CD8-positive, alpha-beta T cell (primary cell): ENCODE measurements at regions of chr16 and their contacts with region 1.

Region 1: GRCh38 chr16:82229796-82230619 is 60.0 kb upstream of the MPHOSPH6 start:
- DNase-seq: peak; percentile 20 to 74 (median 59)
- ATAC-seq: no peak
- H3K4me3 ChIP-seq: no peak overlapping the region
- H3K4me3 Mint-ChIP-seq: no peak overlapping the region
- H3K27ac ChIP-seq: no peak overlapping the region
- H3K27ac Mint-ChIP-seq: no peak overlapping the region
- H3K4me1 ChIP-seq: no peaks in the 10 kb centered on the region
- H3K4me1 Mint-ChIP-seq: no peaks in the 10 kb centered on the region
- H3K27me3 ChIP-seq: no peaks in the 10 kb centered on the region
- H3K27me3 Mint-ChIP-seq: peaks cover 17% of the 10 kb centered on the region
- CTCF ChIP-seq: peak; percentile 96

Region 2: GRCh38 chr16:81366316-81366932 is 863.6 kb before region 1 on chr16:
- CTCF ChIA-PET with region 1: no interaction called
- POLR2A ChIA-PET with region 1: no interaction called
- intact Hi-C with region 1: loop called in 1 of 2 experiments (anchors 10 kb)
- DNase-seq: peak in 3 of 9 experiments; percentile 18 to 72 (median 64)
- ATAC-seq: peak; percentile 83
- H3K4me3 ChIP-seq: no peak overlapping the region
- H3K4me3 Mint-ChIP-seq: no peak overlapping the region
- H3K27ac ChIP-seq: no peak overlapping the region
- H3K27ac Mint-ChIP-seq: no peak overlapping the region
- H3K4me1 ChIP-seq: no peaks in the 10 kb centered on the region
- H3K4me1 Mint-ChIP-seq: no peaks in the 10 kb centered on the region
- H3K27me3 ChIP-seq: no peaks in the 10 kb centered on the region
- H3K27me3 Mint-ChIP-seq: no peaks in the 10 kb centered on the region
- CTCF ChIP-seq: peak; percentile 85

Region 3: DNA sequence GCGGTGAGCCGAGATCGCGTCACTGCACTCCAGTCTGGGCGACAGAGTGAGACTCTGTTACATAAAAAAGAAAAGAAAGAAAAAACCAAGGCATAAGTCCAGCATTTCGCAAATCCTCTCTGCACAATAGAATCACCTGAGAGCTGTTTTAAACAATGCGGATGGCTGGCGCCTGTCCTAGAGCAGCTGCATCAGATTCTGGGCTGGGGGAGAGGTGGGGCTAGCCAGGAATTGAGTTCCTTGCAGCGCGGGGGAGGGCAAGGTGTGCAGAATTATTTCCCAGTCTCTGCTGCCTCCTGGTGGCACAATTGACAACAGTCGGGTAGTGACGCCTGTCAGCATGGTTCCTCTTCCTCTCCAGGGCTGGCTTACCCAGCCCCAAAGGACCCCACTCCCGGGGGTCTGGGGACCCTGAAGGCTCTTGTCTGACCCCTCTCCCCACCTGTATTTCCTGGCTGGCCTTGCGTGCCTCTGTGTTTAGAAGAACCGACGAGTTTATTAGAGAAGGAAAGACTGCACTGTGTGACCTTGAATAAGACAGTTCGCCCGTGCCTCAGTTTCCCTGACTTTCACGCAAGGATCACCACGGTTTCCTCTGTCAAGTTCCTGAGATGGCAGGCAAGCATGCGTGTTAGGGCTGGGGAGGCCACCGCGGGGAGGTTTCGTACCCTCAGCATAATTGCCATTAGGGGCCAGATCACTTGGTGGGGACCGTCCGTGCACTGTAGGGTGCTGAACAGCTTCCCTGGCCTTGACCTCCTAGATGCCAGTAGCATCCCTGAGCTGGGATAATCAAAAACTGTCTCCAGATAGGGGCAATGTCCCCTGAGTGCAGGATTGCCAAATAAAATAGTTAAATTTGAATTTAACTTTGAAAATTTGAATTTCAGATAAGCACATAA is 491.9 kb before region 1 on chr16:
- CTCF ChIA-PET with region 1: no interaction called
- POLR2A ChIA-PET with region 1: no interaction called
- intact Hi-C with region 1: no loop called
- DNase-seq: peak; percentile 69 to 92 (median 87)
- ATAC-seq: peak; percentile 96
- H3K4me3 ChIP-seq: peak overlapping the region; percentile 22 to 24
- H3K4me3 Mint-ChIP-seq: peak overlapping the region; percentile 76
- H3K27ac ChIP-seq: no peak overlapping the region
- H3K27ac Mint-ChIP-seq: no peak overlapping the region
- H3K4me1 ChIP-seq: peaks cover 6% of the 10 kb centered on the region
- H3K4me1 Mint-ChIP-seq: peaks cover 6% of the 10 kb centered on the region
- H3K27me3 ChIP-seq: no peaks in the 10 kb centered on the region
- H3K27me3 Mint-ChIP-seq: no peaks in the 10 kb centered on the region
- CTCF ChIP-seq: peak; percentile 85

Region 4: GRCh38 chr16:81885976-81886586 is 343.9 kb before region 1 on chr16:
- CTCF ChIA-PET with region 1: interaction called, 47 read pairs
- POLR2A ChIA-PET with region 1: no interaction called
- intact Hi-C with region 1: loop called in 1 of 2 experiments (anchors 1 kb)
- DNase-seq: peak in 4 of 9 experiments; percentile 14 to 52 (median 26)
- ATAC-seq: peak; percentile 61
- H3K4me3 ChIP-seq: no peak overlapping the region
- H3K4me3 Mint-ChIP-seq: no peak overlapping the region
- H3K27ac ChIP-seq: no peak overlapping the region
- H3K27ac Mint-ChIP-seq: no peak overlapping the region
- H3K4me1 ChIP-seq: no peaks in the 10 kb centered on the region
- H3K4me1 Mint-ChIP-seq: no peaks in the 10 kb centered on the region
- H3K27me3 ChIP-seq: no peaks in the 10 kb centered on the region
- H3K27me3 Mint-ChIP-seq: no peaks in the 10 kb centered on the region
- CTCF ChIP-seq: peak; percentile 68

Region 5: DNA sequence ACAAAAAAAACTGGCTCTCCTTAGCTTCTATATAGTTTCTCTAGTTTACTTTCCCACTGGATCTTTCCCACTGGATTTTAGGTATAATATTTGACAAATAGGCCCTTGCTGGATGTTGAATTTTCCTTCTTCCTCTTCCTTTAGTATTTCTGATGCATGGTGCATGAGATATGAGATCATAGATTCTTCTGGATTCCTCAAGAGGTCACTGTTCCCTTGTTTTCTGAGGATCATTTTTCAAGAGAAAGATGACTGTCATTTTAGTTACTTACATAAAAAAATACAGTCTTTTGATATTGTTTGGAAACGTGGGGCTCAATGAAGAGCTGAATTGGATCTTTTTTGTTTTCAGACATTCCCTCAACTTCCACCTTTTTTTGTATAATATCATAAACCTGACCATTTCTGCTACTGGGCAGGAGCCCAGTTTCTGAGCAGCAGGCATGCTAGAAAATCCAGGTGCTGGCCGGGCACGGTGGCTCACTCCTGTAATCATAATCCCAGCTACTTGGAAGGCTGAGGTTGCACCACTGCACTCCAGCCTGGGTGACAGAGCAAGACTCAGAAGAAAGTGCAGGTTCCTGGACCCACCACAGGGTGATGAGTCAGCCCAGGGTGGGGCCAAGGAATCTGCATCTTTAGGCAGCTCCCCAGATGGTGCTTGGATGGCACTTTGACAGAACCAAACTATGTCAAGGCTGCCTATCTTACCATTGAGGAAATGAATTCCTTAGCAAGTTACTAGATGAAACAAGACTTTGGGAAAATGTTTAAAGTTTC is 289.0 kb before region 1 on chr16:
- CTCF ChIA-PET with region 1: interaction called, 33 read pairs
- POLR2A ChIA-PET with region 1: no interaction called
- intact Hi-C with region 1: loop called (anchors 1 kb)
- DNase-seq: peak in 2 of 9 experiments; percentile 28 to 45
- ATAC-seq: no peak
- H3K4me3 ChIP-seq: no peak overlapping the region
- H3K4me3 Mint-ChIP-seq: no peak overlapping the region
- H3K27ac ChIP-seq: no peak overlapping the region
- H3K27ac Mint-ChIP-seq: no peak overlapping the region
- H3K4me1 ChIP-seq: no peaks in the 10 kb centered on the region
- H3K4me1 Mint-ChIP-seq: no peaks in the 10 kb centered on the region
- H3K27me3 ChIP-seq: no peaks in the 10 kb centered on the region
- H3K27me3 Mint-ChIP-seq: no peaks in the 10 kb centered on the region
- CTCF ChIP-seq: peak; percentile 25

Region 6: GRCh38 chr16:82031116-82032084 is 198.6 kb before region 1 on chr16:
- CTCF ChIA-PET with region 1: interaction called, 8 read pairs
- POLR2A ChIA-PET with region 1: no interaction called
- intact Hi-C with region 1: loop called (anchors 1 kb)
- DNase-seq: peak in 1 of 9 experiments; percentile 27
- ATAC-seq: no peak
- H3K4me3 ChIP-seq: no peak overlapping the region
- H3K4me3 Mint-ChIP-seq: no peak overlapping the region
- H3K27ac ChIP-seq: no peak overlapping the region
- H3K27ac Mint-ChIP-seq: no peak overlapping the region
- H3K4me1 ChIP-seq: no peaks in the 10 kb centered on the region
- H3K4me1 Mint-ChIP-seq: no peaks in the 10 kb centered on the region
- H3K27me3 ChIP-seq: no peaks in the 10 kb centered on the region
- H3K27me3 Mint-ChIP-seq: peaks cover 22% of the 10 kb centered on the region
- CTCF ChIP-seq: no peak

Region 7: DNA sequence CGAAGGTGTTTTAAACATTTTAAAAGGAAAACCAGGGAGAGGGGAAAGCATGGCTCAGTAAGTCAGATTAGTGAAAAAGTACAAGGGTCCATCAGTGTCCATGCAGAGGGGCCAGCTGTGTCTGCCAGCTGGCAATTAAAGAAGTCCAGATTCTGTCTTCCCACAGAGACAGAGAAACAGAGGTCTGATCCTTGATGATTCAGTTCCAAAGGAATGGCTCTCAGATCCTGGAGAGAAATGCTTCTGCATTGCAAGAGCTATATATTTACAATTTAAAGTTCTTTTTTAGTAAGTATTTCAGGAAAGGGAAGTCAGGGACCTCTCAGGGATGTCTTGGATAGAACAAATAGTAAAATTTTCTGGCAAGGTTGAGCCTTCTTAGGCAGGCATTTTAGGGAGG is 138.8 kb before region 1 on chr16:
- CTCF ChIA-PET with region 1: no interaction called
- POLR2A ChIA-PET with region 1: no interaction called
- intact Hi-C with region 1: no loop called
- DNase-seq: no peak
- ATAC-seq: no peak
- H3K4me3 ChIP-seq: no peak overlapping the region
- H3K4me3 Mint-ChIP-seq: no peak overlapping the region
- H3K27ac ChIP-seq: no peak overlapping the region
- H3K27ac Mint-ChIP-seq: no peak overlapping the region
- H3K4me1 ChIP-seq: peaks cover 5% of the 10 kb centered on the region
- H3K4me1 Mint-ChIP-seq: peaks cover 10% of the 10 kb centered on the region
- H3K27me3 ChIP-seq: no peaks in the 10 kb centered on the region
- H3K27me3 Mint-ChIP-seq: peaks cover 4% of the 10 kb centered on the region
- CTCF ChIP-seq: no peak

Region 8: GRCh38 chr16:82263521-82264143 is 33.6 kb after region 1 on chr16:
- CTCF ChIA-PET with region 1: interaction called, 15 read pairs
- POLR2A ChIA-PET with region 1: no interaction called
- intact Hi-C with region 1: no loop called
- DNase-seq: peak in 8 of 9 experiments; percentile 28 to 76 (median 45)
- ATAC-seq: no peak
- H3K4me3 ChIP-seq: no peak overlapping the region
- H3K4me3 Mint-ChIP-seq: no peak overlapping the region
- H3K27ac ChIP-seq: no peak overlapping the region
- H3K27ac Mint-ChIP-seq: no peak overlapping the region
- H3K4me1 ChIP-seq: no peaks in the 10 kb centered on the region
- H3K4me1 Mint-ChIP-seq: no peaks in the 10 kb centered on the region
- H3K27me3 ChIP-seq: no peaks in the 10 kb centered on the region
- H3K27me3 Mint-ChIP-seq: peaks cover 14% of the 10 kb centered on the region
- CTCF ChIP-seq: peak; percentile 89